SK-N-SH (cell line): ENCODE measurements at regions of chr11 and their contacts with region 1.

Region 1: GRCh38 chr11:17864478-17864941 is 129.9 kb downstream of the KCNC1 start:
- DNase-seq: no peak
- H3K4me3 ChIP-seq: no peak overlapping the region
- H3K27ac ChIP-seq: no peak overlapping the region
- H3K4me1 ChIP-seq: no peaks in the 10 kb centered on the region; a peak in 1 of 4 replicates
- H3K27me3 ChIP-seq: no peaks in the 10 kb centered on the region
- CTCF ChIP-seq: peak; percentile 39
- EP300 ChIP-seq: no peak
- RAD21 ChIP-seq: no peak

Region 2: GRCh38 chr11:17852246-17852645 is 12.3 kb before region 1 on chr11:
- CTCF ChIA-PET with region 1: interaction called, 28 read pairs
- POLR2A ChIA-PET with region 1: no interaction called
- DNase-seq: no peak
- H3K4me3 ChIP-seq: no peak overlapping the region
- H3K27ac ChIP-seq: no peak overlapping the region
- H3K4me1 ChIP-seq: peaks cover 0 to 14% of the 10 kb centered on the region in 2 experiments; a peak in 2 of 4 replicates
- H3K27me3 ChIP-seq: no peaks in the 10 kb centered on the region
- CTCF ChIP-seq: no peak
- EP300 ChIP-seq: no peak
- RAD21 ChIP-seq: no peak